Activated T-helper 1 cell treated with anti-CD3 and anti-CD28 coated beads, Interleukin-12 subunit alpha, Interleukin-12 subunit beta, Interleukin-2, Interleukin-4 antibody, amounts not matched to agents 30 ng/mL and 10 ng/mL and 1 ng/mL, durations not matched to agents 14 hours and 24 hours and 36 hours (primary cell): ENCODE measurements at regions of chr11 and their contacts with region 1.

Region 1: GRCh38 chr11:86291466-86292262 is 10.4 kb upstream of the HIKESHI start:
- DNase-seq: peak; percentile 39
- H3K4me3 Mint-ChIP-seq: peak overlapping the region; percentile 34
- H3K27ac Mint-ChIP-seq: peak overlapping the region; percentile 82
- H3K4me1 Mint-ChIP-seq: peaks cover 61% of the 10 kb centered on the region
- H3K27me3 Mint-ChIP-seq: no peaks in the 10 kb centered on the region

Region 2: DNA sequence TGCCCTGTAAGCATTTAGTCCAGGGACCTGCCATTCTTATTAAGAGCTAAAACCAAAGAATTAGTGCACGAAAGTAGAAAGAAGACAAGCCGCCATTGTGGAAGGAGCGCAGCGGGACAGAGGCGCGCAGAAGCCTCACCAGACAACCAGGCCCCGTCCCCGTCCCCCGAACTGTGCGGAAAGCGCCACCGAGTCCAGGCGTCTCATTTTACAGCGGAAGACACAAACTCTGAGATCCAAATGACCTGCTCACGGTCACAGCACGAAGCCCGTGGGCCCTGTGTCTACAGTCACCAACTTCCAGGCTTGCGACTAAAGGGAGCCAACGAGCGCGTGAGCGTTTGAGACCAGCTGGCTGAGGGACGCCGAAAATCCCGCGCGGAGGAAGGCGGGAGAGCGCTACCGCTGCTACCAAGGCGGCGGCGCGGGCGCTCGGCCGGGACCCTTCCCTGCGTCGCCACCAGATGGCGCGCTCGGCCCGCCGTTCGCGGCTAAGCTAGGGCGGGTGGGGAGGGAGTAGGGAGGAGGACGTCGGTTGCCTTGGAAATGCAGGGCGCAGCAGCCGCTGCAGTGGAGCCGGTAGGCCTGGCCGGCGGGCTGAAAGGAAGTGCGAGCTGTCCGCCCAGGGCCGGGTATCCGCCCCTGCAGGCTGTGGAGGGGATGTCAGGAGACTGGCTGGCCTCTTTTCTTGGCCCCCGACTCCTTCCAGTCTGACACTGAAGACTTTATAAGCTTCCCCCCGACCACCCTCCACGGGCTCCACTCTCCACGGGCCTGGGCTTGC is 436.9 kb before region 1 on chr11:
- intact Hi-C with region 1: loop called (anchors 1 kb)
- DNase-seq: peak; percentile 88
- H3K4me3 Mint-ChIP-seq: peak overlapping the region; percentile 84
- H3K27ac Mint-ChIP-seq: peak overlapping the region; percentile 83
- H3K4me1 Mint-ChIP-seq: peaks cover 18% of the 10 kb centered on the region
- H3K27me3 Mint-ChIP-seq: peaks cover 5% of the 10 kb centered on the region

Region 3: GRCh38 chr11:86047275-86047991 is 244.2 kb before region 1 on chr11:
- intact Hi-C with region 1: loop called (anchors 1 kb)
- DNase-seq: no peak
- H3K4me3 Mint-ChIP-seq: peak overlapping the region; percentile 69
- H3K27ac Mint-ChIP-seq: peak overlapping the region; percentile 91
- H3K4me1 Mint-ChIP-seq: peaks cover 88% of the 10 kb centered on the region
- H3K27me3 Mint-ChIP-seq: no peaks in the 10 kb centered on the region

Region 4: GRCh38 chr11:86202013-86202336 is 89.7 kb before region 1 on chr11:
- intact Hi-C with region 1: loop called (anchors 1 kb)
- DNase-seq: no peak
- H3K4me3 Mint-ChIP-seq: no peak overlapping the region
- H3K27ac Mint-ChIP-seq: no peak overlapping the region
- H3K4me1 Mint-ChIP-seq: peaks cover 21% of the 10 kb centered on the region
- H3K27me3 Mint-ChIP-seq: no peaks in the 10 kb centered on the region

Region 5: DNA sequence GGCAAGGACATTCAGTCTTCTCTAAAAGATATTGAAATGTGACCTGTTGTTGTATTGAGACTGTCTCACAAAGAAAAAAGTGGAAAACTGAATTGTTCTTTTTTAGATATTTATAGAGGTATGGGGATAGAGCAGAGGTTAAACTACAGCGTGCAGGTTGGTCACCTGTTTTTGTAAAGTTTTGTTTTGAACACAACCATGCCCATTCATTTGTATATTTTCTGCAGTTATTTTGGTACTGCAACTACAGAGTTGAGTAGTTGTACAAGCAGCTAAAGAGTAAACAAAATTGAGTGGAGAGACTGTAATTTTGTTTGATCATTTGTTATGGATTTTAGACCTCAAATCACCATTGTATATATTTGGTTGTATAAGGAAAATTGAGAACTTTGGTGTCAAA is 35.8 kb before region 1 on chr11:
- intact Hi-C with region 1: loop called (anchors 1 kb)
- DNase-seq: no peak
- H3K4me3 Mint-ChIP-seq: peak overlapping the region; percentile 15
- H3K27ac Mint-ChIP-seq: peak overlapping the region; percentile 75
- H3K4me1 Mint-ChIP-seq: peaks cover 50% of the 10 kb centered on the region
- H3K27me3 Mint-ChIP-seq: no peaks in the 10 kb centered on the region

Region 6: GRCh38 chr11:86523738-86524619 is 232.3 kb after region 1 on chr11:
- intact Hi-C with region 1: loop called (anchors 1 kb)
- DNase-seq: no peak
- H3K4me3 Mint-ChIP-seq: peak overlapping the region; percentile 56
- H3K27ac Mint-ChIP-seq: peak overlapping the region; percentile 90
- H3K4me1 Mint-ChIP-seq: peaks cover 36% of the 10 kb centered on the region
- H3K27me3 Mint-ChIP-seq: peaks cover 2% of the 10 kb centered on the region